Dendritic cell treated with granulocyte-macrophage colony-stimulating factor and Interleukin-4, amounts not matched to agents 40 ng/mL and 50 ng/mL, for 4 days (primary cell): ENCODE measurements at regions of chr9 and their contacts with region 1.

Region 1: DNA sequence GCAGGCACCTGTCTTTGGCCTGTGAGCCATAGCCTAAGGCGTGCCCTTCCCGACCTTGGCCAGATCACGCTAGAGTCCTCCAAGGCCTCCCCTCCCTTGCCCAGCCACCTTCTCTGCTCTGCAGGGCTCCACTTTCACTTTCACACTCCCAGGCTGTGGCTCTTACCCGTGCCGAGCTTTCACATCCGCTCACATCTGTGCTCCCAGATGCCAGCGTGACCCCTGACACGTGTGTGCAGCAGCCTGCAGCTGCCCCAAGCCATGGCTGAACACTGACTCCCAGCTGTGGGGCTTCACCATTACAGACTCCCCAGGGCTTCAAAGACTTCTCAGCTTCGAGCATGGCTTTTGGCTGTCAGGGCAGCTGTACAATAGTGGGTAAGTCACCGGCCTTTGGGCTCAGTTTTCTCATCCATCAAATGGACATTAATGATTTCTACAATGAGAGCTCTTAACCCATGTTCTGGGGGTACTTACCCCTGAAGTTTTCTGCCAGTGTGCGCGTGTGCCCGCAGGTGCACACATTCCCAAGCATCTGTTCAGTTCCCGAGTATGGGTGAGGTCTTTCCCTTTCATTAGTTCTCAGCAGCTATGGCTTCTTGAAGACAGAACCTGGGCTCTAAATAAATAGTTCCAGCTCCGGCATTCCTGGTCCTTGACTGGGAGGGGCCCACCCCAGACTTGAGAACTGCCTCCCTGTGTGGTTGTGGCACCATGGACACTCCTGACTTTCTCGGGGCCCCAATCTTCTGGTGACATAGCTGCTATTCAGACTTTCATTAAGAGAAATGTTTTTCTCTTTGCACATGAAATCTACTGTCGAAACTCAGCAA is 118.6 kb downstream of the RGS3 start:
- H3K4me3 Mint-ChIP-seq: peak overlapping the region; percentile 75
- H3K27ac Mint-ChIP-seq: peak overlapping the region; percentile 93
- H3K4me1 Mint-ChIP-seq: peaks cover 92% of the 10 kb centered on the region
- H3K27me3 Mint-ChIP-seq: no peaks in the 10 kb centered on the region

Region 2: GRCh38 chr9:113317777-113318176 is 264.3 kb before region 1 on chr9:
- intact Hi-C with region 1: no loop called
- H3K4me3 Mint-ChIP-seq: no peak overlapping the region
- H3K27ac Mint-ChIP-seq: no peak overlapping the region
- H3K4me1 Mint-ChIP-seq: no peaks in the 10 kb centered on the region
- H3K27me3 Mint-ChIP-seq: no peaks in the 10 kb centered on the region

Region 3: DNA sequence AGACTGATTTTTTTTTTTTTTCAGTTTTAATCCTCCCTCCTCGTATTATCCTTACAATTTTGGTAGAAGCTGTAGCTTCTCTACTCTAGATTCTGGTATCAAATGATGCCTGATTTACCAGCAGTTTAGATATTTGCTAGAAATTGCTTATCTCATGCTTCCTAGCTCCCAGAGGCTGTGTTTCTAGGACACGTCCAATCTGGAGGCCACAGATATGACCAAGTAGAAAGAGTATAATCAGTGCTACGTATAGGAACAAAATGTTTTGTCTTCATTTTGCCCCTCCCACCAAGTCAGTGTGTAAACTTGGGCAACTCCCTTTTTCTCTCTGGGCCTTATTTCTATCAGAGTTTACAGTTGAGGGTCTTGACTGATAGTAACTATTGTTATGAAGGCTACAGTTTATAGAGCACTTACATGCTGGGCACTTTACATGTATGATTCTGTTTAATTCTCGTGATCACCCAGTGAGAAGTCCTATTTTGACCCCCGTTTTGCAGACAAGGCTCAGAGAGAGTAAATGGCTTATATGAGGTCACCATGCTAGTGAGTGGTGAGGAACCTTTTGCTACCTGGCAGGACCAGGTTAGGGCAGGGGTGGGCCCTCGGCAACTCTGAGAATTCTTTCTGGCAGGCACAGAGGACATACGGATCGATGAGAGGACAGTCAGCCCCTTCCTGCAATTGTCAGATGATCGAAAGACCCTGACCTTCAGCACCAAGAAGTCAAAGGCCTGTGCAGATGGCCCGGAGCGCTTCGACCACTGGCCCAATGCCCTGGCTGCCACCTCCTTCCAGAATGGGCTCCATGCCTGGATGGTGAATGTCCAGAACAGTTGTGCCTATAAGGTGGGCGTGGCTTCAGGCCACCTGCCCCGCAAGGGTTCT is 212.9 kb before region 1 on chr9:
- intact Hi-C with region 1: no loop called
- H3K4me3 Mint-ChIP-seq: no peak overlapping the region
- H3K27ac Mint-ChIP-seq: no peak overlapping the region
- H3K4me1 Mint-ChIP-seq: peaks cover 18% of the 10 kb centered on the region
- H3K27me3 Mint-ChIP-seq: no peaks in the 10 kb centered on the region

Region 4: GRCh38 chr9:113523421-113524236 is 58.5 kb before region 1 on chr9:
- intact Hi-C with region 1: loop called (anchors 5 kb)
- H3K4me3 Mint-ChIP-seq: peak overlapping the region; percentile 70
- H3K27ac Mint-ChIP-seq: peak overlapping the region; percentile 87
- H3K4me1 Mint-ChIP-seq: peaks cover 75% of the 10 kb centered on the region
- H3K27me3 Mint-ChIP-seq: peaks cover 18% of the 10 kb centered on the region

Region 5: DNA sequence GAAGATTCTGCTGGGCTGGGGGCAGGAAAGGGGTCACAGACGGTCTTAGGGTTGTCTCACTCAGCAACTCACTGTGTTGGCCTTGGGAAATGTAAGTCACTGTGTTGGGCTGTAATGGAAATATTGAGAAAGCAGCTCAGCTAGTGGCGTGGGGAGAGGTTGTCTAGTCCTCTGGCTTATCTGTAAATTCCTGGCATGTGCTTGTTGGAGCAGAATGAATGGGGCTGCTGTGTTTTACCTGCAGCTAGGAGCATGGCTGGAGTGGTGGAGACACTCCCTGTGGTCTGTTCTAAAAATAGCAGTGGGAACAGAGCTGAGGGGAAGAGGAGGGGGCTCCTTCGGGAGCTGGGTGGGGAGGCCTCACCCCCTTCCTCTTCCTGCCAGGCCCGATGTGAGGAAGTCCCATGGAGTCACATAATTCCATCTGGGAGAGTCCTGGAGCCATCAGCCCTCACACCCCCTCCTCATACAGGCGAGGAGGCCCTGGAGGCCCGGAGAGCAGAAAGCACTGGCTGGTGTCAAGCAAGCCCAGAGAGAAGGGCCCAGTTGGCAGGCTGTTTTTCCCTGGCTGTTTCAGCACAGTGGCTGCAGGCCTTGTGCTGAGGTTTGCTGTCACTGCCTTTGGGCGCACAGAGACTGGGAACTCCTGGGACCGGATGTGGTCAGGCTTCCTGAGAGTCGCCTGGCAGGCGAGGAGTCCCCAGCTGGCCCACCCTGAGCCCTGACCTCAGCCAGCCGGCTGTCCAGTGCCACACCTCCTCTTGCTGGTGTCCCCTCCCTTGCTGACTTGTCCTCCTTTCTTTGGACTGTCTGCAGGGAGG is 33.6 kb before region 1 on chr9:
- intact Hi-C with region 1: loop called (anchors 5 kb)
- H3K4me3 Mint-ChIP-seq: no peak overlapping the region
- H3K27ac Mint-ChIP-seq: peak overlapping the region; percentile 85
- H3K4me1 Mint-ChIP-seq: peaks cover 40% of the 10 kb centered on the region
- H3K27me3 Mint-ChIP-seq: no peaks in the 10 kb centered on the region